GM12878 (cell line): ENCODE measurements at regions of chr12 and their contacts with region 1.

Region 1: GRCh38 chr12:103114296-103115055 is 157.0 kb downstream of the ASCL1 start:
- DNase-seq: peak; percentile 95
- ATAC-seq: peak; percentile 98
- H3K4me3 ChIP-seq: no peak overlapping the region
- H3K27ac ChIP-seq: peak overlapping the region; percentile 80
- H3K4me1 ChIP-seq: peaks cover 19% of the 10 kb centered on the region
- H3K27me3 ChIP-seq: no peaks in the 10 kb centered on the region
- CTCF ChIP-seq: no peak
- EP300 ChIP-seq: peak; percentile 73 to 94; a peak in 3 of 4 replicates
- POLR2A ChIP-seq: no peak
- RAD21 ChIP-seq: peak; percentile 47

Region 2: DNA sequence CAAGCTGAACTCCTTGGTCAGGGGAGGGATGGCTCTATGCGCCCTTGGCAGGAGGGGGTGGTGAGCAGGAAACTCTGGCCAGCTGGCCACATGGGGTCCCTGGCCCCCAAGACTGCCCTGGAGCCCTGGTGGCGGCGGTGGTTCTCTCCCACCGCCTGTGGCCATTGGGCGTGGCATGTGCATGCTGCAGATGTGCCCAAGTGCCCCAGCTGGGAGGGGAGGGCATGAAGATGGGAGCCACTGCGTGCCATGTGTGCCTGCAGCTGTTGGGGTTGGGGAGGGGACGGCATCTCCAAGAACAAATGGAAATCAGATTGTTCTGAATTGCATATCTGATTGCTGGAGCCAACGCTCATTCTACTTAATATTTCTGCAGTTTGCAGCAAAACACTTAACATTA is 518.4 kb before region 1 on chr12:
- CTCF ChIA-PET with region 1: no interaction called
- POLR2A ChIA-PET with region 1: no interaction called
- RAD21 ChIA-PET with region 1: no interaction called
- SMC1A ChIA-PET with region 1: no interaction called
- in situ Hi-C with region 1: no loop called
- intact Hi-C with region 1: no loop called
- DNase-seq: no peak
- ATAC-seq: no peak
- H3K4me3 ChIP-seq: no peak overlapping the region
- H3K27ac ChIP-seq: no peak overlapping the region
- H3K4me1 ChIP-seq: no peaks in the 10 kb centered on the region
- H3K27me3 ChIP-seq: no peaks in the 10 kb centered on the region
- CTCF ChIP-seq: no peak
- EP300 ChIP-seq: no peak
- POLR2A ChIP-seq: no peak
- RAD21 ChIP-seq: no peak

Region 3: GRCh38 chr12:102958073-102958829 is 156.2 kb before region 1 on chr12:
- CTCF ChIA-PET with region 1: interaction called, 3 read pairs
- POLR2A ChIA-PET with region 1: interaction called, 3 read pairs
- RAD21 ChIA-PET with region 1: interaction called, 5 read pairs
- SMC1A ChIA-PET with region 1: interaction called, 7 read pairs
- in situ Hi-C with region 1: no loop called
- intact Hi-C with region 1: loop called (anchors 2 kb)
- DNase-seq: no peak
- ATAC-seq: peak; percentile 72
- H3K4me3 ChIP-seq: peak overlapping the region; percentile 81
- H3K27ac ChIP-seq: no peak overlapping the region
- H3K4me1 ChIP-seq: peaks cover 8% of the 10 kb centered on the region
- H3K27me3 ChIP-seq: peaks cover 0 to 24% of the 10 kb centered on the region in 2 experiments; a peak in 2 of 4 replicates
- CTCF ChIP-seq: peak in 2 of 3 experiments; percentile 7 to 15; a peak in 2 of 6 replicates
- EP300 ChIP-seq: no peak; a peak in 1 of 4 replicates
- POLR2A ChIP-seq: no peak
- RAD21 ChIP-seq: no peak

Region 4: GRCh38 chr12:102990419-102990818 is 124.1 kb before region 1 on chr12:
- CTCF ChIA-PET with region 1: interaction called, 4 read pairs
- POLR2A ChIA-PET with region 1: no interaction called
- RAD21 ChIA-PET with region 1: interaction called, 5 read pairs
- SMC1A ChIA-PET with region 1: interaction called, 8 read pairs
- in situ Hi-C with region 1: no loop called
- intact Hi-C with region 1: loop called (anchors 5 kb)
- DNase-seq: no peak
- ATAC-seq: peak; percentile 49
- H3K4me3 ChIP-seq: no peak overlapping the region
- H3K27ac ChIP-seq: no peak overlapping the region
- H3K4me1 ChIP-seq: no peaks in the 10 kb centered on the region; the same call in 1 of the 2 replicates
- H3K27me3 ChIP-seq: no peaks in the 10 kb centered on the region
- CTCF ChIP-seq: 0 out of 6 replicates have a peak, but pooled peaks of 1 of the 3 experiments have one; percentile 14
- EP300 ChIP-seq: no peak
- POLR2A ChIP-seq: no peak
- RAD21 ChIP-seq: peak; percentile 46; the same call in 1 of the 2 replicates

Region 5: GRCh38 chr12:103140286-103140685 is 25.8 kb after region 1 on chr12:
- CTCF ChIA-PET with region 1: interaction called, 4 read pairs
- POLR2A ChIA-PET with region 1: interaction called, 4 read pairs
- RAD21 ChIA-PET with region 1: interaction called, 17 read pairs
- SMC1A ChIA-PET with region 1: interaction called, 19 read pairs
- in situ Hi-C with region 1: no loop called
- intact Hi-C with region 1: loop called (anchors 1 kb)
- DNase-seq: no peak
- ATAC-seq: no peak
- H3K4me3 ChIP-seq: no peak overlapping the region
- H3K27ac ChIP-seq: no peak overlapping the region
- H3K4me1 ChIP-seq: no peaks in the 10 kb centered on the region
- H3K27me3 ChIP-seq: no peaks in the 10 kb centered on the region
- CTCF ChIP-seq: no peak
- EP300 ChIP-seq: no peak
- POLR2A ChIP-seq: no peak
- RAD21 ChIP-seq: no peak

Region 6: DNA sequence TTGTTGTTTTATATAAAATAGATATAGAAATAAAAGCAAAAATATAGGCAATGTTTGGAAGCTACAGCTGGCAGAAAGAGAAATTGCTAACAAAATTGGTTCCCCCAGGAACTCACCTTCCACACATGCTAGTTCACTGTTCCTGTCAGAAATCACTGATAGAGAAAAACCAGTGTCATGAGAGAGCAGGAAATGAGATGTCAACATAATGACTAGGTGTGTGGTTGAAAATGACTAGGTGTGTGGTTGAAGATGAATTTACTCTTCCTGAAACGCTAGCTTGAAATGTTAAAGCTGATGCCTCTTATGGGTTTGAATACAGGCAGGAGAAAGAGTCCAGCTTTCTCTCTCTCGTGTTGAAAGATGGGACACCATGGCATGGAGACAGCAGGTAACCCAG is 165.0 kb after region 1 on chr12:
- CTCF ChIA-PET with region 1: no interaction called
- POLR2A ChIA-PET with region 1: no interaction called
- RAD21 ChIA-PET with region 1: interaction called, 6 read pairs
- SMC1A ChIA-PET with region 1: interaction called, 6 read pairs
- in situ Hi-C with region 1: no loop called
- intact Hi-C with region 1: loop called (anchors 2 kb)
- DNase-seq: peak; percentile 93
- ATAC-seq: peak; percentile 94
- H3K4me3 ChIP-seq: no peak overlapping the region
- H3K27ac ChIP-seq: peak overlapping the region; percentile 53; the same call in 1 of the 2 replicates
- H3K4me1 ChIP-seq: peaks cover 21% of the 10 kb centered on the region
- H3K27me3 ChIP-seq: no peaks in the 10 kb centered on the region
- CTCF ChIP-seq: no peak
- EP300 ChIP-seq: peak; percentile 83 to 93
- POLR2A ChIP-seq: no peak
- RAD21 ChIP-seq: 0 out of 2 replicates have a peak, but pooled peaks have one; percentile 8

Region 7: DNA sequence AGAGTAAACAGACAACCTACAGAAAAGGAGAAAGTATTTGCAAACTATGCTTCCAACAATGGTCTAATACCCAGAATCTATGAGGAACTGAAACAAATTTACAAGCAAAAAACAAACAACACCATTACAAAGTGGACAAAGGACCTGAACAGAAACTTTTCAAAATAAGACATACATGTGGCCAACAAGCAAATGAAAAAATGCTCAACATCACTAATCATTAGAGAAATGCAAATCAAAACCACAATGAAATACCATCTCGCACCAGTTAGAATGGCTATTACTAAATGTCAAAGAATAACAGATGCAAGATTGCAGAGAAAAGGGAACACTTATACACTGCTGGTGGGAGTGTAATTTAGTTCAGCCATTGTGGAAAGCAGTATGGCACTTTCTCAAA is 255.5 kb after region 1 on chr12:
- CTCF ChIA-PET with region 1: no interaction called
- POLR2A ChIA-PET with region 1: no interaction called
- RAD21 ChIA-PET with region 1: no interaction called
- SMC1A ChIA-PET with region 1: no interaction called
- in situ Hi-C with region 1: no loop called
- intact Hi-C with region 1: loop called (anchors 5 kb)
- DNase-seq: peak; percentile 78
- ATAC-seq: peak; percentile 89
- H3K4me3 ChIP-seq: no peak overlapping the region
- H3K27ac ChIP-seq: no peak overlapping the region
- H3K4me1 ChIP-seq: peaks cover 10% of the 10 kb centered on the region
- H3K27me3 ChIP-seq: no peaks in the 10 kb centered on the region
- CTCF ChIP-seq: no peak
- EP300 ChIP-seq: peak; percentile 76 to 86
- POLR2A ChIP-seq: no peak
- RAD21 ChIP-seq: no peak